ENCODE measurements at regions of chr11 and their contacts with region 1.

Region 1: GRCh38 chr11:121328967-121329679 is 36.6 kb downstream of the SC5D start:
- DNase-seq: no peak
- H3K4me3 Mint-ChIP-seq: no peak overlapping the region
- H3K27ac Mint-ChIP-seq: no peak overlapping the region
- H3K4me1 Mint-ChIP-seq: no peaks in the 10 kb centered on the region
- H3K27me3 Mint-ChIP-seq: peaks cover 4% of the 10 kb centered on the region

Region 2: GRCh38 chr11:121341609-121342008 is 12.5 kb after region 1 on chr11:
- intact Hi-C with region 1: loop called (anchors 2 kb)
- DNase-seq: no peak
- H3K4me3 Mint-ChIP-seq: no peak overlapping the region
- H3K27ac Mint-ChIP-seq: no peak overlapping the region
- H3K4me1 Mint-ChIP-seq: peaks cover 52% of the 10 kb centered on the region
- H3K27me3 Mint-ChIP-seq: peaks cover 6% of the 10 kb centered on the region

Region 3: GRCh38 chr11:121367001-121367843 is 38.1 kb after region 1 on chr11:
- intact Hi-C with region 1: loop called (anchors 5 kb)
- DNase-seq: peak; percentile 17
- H3K4me3 Mint-ChIP-seq: peak overlapping the region; percentile 60
- H3K27ac Mint-ChIP-seq: peak overlapping the region; percentile 77
- H3K4me1 Mint-ChIP-seq: peaks cover 50% of the 10 kb centered on the region
- H3K27me3 Mint-ChIP-seq: no peaks in the 10 kb centered on the region